Mammary epithelial cell (primary cell): ENCODE measurements at regions of chr1 and their contacts with region 1.

Region 1: DNA sequence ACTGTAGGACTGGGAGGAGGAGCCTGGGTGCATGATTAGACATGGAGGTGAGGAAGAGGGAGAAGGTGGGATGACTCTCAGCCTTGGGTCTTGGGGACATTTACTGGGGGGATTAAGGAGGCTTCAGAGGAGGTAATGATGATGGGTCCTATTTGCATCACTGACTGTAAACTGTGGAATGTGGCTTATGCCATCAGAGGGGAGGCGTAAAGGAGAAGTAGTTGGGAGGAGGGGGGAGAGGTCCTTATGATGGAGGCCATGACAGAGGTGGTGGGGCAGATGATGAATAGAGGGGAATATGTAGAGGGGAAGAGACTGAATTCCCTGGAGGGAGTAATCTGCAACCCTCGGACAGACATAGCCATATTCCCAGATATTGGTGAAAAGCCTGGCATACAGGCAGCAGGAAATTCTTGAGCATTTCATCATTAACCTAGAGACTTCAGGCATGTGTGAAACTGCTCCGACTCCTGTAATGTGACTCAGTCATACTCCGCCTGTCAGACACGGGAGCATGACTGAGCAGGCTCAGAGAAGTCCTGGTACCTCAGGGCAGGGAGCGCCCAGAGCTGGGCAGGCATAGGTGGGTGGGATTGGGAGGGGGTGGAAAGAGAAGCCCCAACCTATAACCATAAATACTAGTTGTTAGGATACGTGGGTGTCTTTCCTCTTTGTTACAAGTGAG is 8.0 kb upstream of the LCE5A start:
- DNase-seq: peak; percentile 97
- H3K4me3 ChIP-seq: no peak overlapping the region
- H3K27ac ChIP-seq: peak overlapping the region; percentile 89
- H3K4me1 ChIP-seq: peaks cover 56% of the 10 kb centered on the region
- H3K27me3 ChIP-seq: no peaks in the 10 kb centered on the region
- CTCF ChIP-seq: no peak

Region 2: DNA sequence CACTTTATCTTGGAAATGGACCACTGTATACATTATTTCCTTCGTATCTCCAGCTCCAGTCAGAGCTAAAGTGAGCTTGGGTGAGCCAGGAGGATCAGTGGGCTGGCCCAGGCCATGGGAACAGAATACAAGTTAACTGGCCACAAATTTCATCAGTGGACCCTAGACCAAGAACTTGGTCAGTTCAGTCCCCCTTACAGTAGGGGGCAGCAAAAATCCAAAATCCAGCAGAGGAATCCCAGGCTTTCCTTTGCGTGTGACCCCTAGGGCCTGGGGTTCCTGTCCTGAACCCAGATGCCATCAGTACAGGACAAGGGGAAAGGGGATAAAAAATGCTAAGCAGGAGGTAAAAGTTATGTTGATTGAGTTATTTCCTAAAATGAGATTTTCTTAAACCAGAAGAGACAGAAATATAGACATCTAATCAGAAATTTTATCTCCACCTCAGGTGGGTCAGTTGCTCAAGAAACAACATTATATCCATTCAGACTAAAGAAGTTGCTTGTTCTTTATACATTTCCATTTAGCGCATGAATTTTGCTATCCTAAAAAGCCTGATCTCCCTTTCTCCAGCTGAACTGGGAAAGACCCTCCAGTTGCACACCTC is 16.1 kb before region 1 on chr1:
- CTCF ChIA-PET with region 1: interaction called, 8 read pairs
- dilution Hi-C with region 1: no loop called
- in situ Hi-C with region 1: no loop called
- intact Hi-C with region 1: loop called (anchors 2 kb)
- DNase-seq: no peak
- H3K4me3 ChIP-seq: no peak overlapping the region
- H3K27ac ChIP-seq: no peak overlapping the region
- H3K4me1 ChIP-seq: peaks cover 16% of the 10 kb centered on the region
- H3K27me3 ChIP-seq: no peaks in the 10 kb centered on the region
- CTCF ChIP-seq: peak; percentile 34 to 58

Region 3: GRCh38 chr1:152519851-152520250 is 17.2 kb after region 1 on chr1:
- CTCF ChIA-PET with region 1: no interaction called
- dilution Hi-C with region 1: no loop called
- in situ Hi-C with region 1: no loop called
- intact Hi-C with region 1: loop called (anchors 2 kb)
- DNase-seq: no peak
- H3K4me3 ChIP-seq: no peak overlapping the region
- H3K27ac ChIP-seq: no peak overlapping the region
- H3K4me1 ChIP-seq: peaks cover 25% of the 10 kb centered on the region
- H3K27me3 ChIP-seq: no peaks in the 10 kb centered on the region
- CTCF ChIP-seq: no peak

Region 4: GRCh38 chr1:152539901-152540300 is 37.3 kb after region 1 on chr1:
- CTCF ChIA-PET with region 1: no interaction called
- dilution Hi-C with region 1: no loop called
- in situ Hi-C with region 1: no loop called
- intact Hi-C with region 1: no loop called
- DNase-seq: no peak
- H3K4me3 ChIP-seq: no peak overlapping the region
- H3K27ac ChIP-seq: no peak overlapping the region
- H3K4me1 ChIP-seq: no peaks in the 10 kb centered on the region
- H3K27me3 ChIP-seq: no peaks in the 10 kb centered on the region
- CTCF ChIP-seq: no peak

Region 5: DNA sequence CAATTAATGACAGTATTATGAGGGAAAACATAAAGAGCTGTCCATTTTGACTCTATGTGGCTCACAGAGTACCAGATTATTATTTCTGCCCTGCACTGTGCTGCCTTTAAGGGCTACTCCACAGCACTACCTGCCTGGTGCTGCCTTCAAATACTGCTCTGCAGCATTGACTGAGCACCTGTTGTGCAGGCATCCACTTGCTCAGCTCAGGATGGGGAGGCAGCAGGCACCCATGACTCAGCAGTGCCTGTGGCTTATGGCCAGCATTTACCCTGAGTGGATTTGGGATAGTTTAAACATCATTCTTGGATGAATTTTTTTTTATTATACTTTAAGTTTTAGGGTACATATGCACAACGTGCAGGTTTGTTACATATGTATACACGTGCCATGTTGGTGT is 254.2 kb after region 1 on chr1:
- CTCF ChIA-PET with region 1: no interaction called
- dilution Hi-C with region 1: no loop called
- in situ Hi-C with region 1: no loop called
- intact Hi-C with region 1: loop called (anchors 5 kb)
- DNase-seq: peak; percentile 65
- H3K4me3 ChIP-seq: no peak overlapping the region
- H3K27ac ChIP-seq: no peak overlapping the region
- H3K4me1 ChIP-seq: peaks cover 63% of the 10 kb centered on the region
- H3K27me3 ChIP-seq: no peaks in the 10 kb centered on the region
- CTCF ChIP-seq: no peak